ENCODE measurements at regions of chr7 and their contacts with region 1.

Region 1: DNA sequence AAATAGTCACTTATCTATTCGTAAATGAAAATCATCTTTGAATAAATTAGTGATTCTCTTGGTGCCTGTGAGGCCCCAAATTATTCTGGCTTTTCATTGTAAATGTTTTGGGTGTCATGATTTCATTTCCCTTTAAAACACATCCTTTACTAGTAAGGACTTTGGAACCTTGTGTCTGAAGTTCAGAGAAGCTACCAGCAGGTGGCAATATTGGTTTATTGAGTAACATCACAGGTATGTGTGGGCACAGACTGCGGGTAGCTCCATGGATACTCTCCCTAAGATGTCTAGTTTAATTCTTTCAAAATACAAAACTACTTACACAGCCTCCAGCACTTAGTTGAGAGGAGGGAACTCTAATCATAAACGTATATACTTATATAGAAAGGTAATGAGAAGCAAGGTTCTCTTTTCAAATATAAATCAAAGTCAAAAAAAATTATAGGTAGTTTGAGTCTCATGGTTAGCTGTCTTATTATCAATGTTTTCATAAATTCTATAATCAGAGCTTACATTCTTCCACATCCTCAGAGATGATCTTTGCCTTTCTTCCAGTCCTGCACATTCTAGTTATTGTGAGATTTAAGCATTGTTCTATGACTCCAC is 449.6 kb downstream of the GRM8 start:
- DNase-seq: peak; percentile 54
- ATAC-seq: peak; percentile 66
- H3K4me3 Mint-ChIP-seq: no peak overlapping the region
- H3K27ac Mint-ChIP-seq: no peak overlapping the region
- H3K4me1 Mint-ChIP-seq: no peaks in the 10 kb centered on the region
- H3K27me3 Mint-ChIP-seq: peaks cover 7% of the 10 kb centered on the region

Region 2: DNA sequence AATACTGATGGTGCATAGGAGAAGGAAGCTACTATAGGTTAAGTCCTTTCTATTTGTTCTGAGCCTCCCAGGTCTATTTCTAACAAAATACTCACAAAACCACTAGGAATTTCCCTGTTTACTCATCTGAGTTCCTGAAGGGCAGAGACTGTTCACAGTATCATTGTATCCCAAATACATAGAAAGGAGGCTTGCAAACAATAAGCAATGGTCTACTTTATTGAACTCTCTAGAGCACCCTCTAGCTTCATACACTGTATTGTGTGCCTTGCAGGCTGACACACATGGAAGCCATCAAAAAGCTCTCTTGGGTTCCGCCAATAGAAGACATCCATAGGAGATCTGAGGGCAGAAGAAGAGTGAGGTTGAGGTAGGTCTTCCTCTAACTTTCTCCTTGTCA is 376.5 kb before region 1 on chr7:
- CTCF ChIA-PET with region 1: no interaction called
- POLR2A ChIA-PET with region 1: no interaction called
- intact Hi-C with region 1: no loop called
- DNase-seq: no peak
- ATAC-seq: no peak
- H3K4me3 Mint-ChIP-seq: no peak overlapping the region
- H3K27ac Mint-ChIP-seq: no peak overlapping the region
- H3K4me1 Mint-ChIP-seq: no peaks in the 10 kb centered on the region
- H3K27me3 Mint-ChIP-seq: no peaks in the 10 kb centered on the region

Region 3: GRCh38 chr7:126760914-126761577 is 42.1 kb before region 1 on chr7:
- CTCF ChIA-PET with region 1: no interaction called
- POLR2A ChIA-PET with region 1: no interaction called
- intact Hi-C with region 1: no loop called
- DNase-seq: no peak
- ATAC-seq: no peak
- H3K4me3 Mint-ChIP-seq: no peak overlapping the region
- H3K27ac Mint-ChIP-seq: no peak overlapping the region
- H3K4me1 Mint-ChIP-seq: no peaks in the 10 kb centered on the region
- H3K27me3 Mint-ChIP-seq: peaks cover 3% of the 10 kb centered on the region

Region 4: GRCh38 chr7:126881315-126881714 is 78.2 kb after region 1 on chr7:
- CTCF ChIA-PET with region 1: no interaction called
- POLR2A ChIA-PET with region 1: no interaction called
- intact Hi-C with region 1: loop called in 1 of 2 experiments (anchors 5 kb)
- DNase-seq: no peak
- ATAC-seq: no peak
- H3K4me3 Mint-ChIP-seq: no peak overlapping the region
- H3K27ac Mint-ChIP-seq: no peak overlapping the region
- H3K4me1 Mint-ChIP-seq: no peaks in the 10 kb centered on the region
- H3K27me3 Mint-ChIP-seq: peaks cover 3% of the 10 kb centered on the region

Region 5: DNA sequence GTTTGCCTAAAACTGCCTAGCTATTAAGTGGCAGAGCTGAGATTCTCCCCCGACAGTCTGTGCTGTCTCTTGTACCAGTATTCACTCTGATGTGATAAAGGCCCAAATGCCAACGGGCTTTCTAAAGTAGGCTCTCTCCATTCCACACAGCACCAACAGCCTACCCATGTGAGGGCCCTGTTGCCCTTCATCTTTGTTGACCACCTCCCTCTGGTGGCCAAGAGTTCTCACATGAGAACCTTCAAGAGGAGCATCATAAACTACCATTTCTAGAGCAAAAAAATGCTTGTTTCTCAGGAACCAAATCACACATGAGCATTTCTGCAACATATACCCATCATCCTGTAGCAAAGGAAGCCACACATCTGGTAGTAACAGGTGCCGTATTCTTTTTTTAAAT is 263.8 kb after region 1 on chr7:
- CTCF ChIA-PET with region 1: no interaction called
- POLR2A ChIA-PET with region 1: no interaction called
- intact Hi-C with region 1: loop called in 1 of 2 experiments (anchors 5 kb)
- DNase-seq: no peak
- ATAC-seq: no peak
- H3K4me3 Mint-ChIP-seq: no peak overlapping the region
- H3K27ac Mint-ChIP-seq: no peak overlapping the region
- H3K4me1 Mint-ChIP-seq: no peaks in the 10 kb centered on the region
- H3K27me3 Mint-ChIP-seq: peaks cover 8% of the 10 kb centered on the region

Region 6: GRCh38 chr7:127404286-127405072 is 601.3 kb after region 1 on chr7:
- CTCF ChIA-PET with region 1: no interaction called
- POLR2A ChIA-PET with region 1: no interaction called
- intact Hi-C with region 1: loop called in 1 of 2 experiments (anchors 5 kb)
- DNase-seq: no peak
- ATAC-seq: peak; percentile 87
- H3K4me3 Mint-ChIP-seq: peak overlapping the region; percentile 39
- H3K27ac Mint-ChIP-seq: peak overlapping the region; percentile 63
- H3K4me1 Mint-ChIP-seq: peaks cover 18% of the 10 kb centered on the region
- H3K27me3 Mint-ChIP-seq: peaks cover 3% of the 10 kb centered on the region

Region 7: DNA sequence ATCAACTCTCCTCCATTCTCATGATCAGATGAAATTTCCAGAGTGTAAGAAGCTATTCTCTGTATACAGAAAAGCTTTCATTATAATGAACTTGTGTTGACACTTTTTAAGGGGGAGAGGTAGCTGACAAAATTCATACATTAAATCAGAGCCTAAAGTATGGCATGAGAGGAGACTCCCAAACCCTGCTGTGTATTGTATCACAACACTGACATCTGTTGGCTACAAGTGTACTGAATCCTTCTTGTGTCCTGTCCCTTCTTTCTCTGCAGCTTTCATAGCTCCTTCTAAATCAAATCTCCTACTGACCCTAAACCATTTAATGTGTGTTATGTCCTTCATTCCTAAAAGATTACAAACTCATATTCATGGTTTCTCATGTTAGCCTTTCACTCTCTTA is 711.3 kb after region 1 on chr7:
- CTCF ChIA-PET with region 1: no interaction called
- POLR2A ChIA-PET with region 1: no interaction called
- intact Hi-C with region 1: loop called (anchors 2 to 5 kb)
- DNase-seq: no peak
- ATAC-seq: peak; percentile 49
- H3K4me3 Mint-ChIP-seq: no peak overlapping the region
- H3K27ac Mint-ChIP-seq: no peak overlapping the region
- H3K4me1 Mint-ChIP-seq: no peaks in the 10 kb centered on the region
- H3K27me3 Mint-ChIP-seq: peaks cover 11% of the 10 kb centered on the region